GM12878 (cell line): ENCODE measurements at regions of chr22 and their contacts with region 1.

Region 1: GRCh38 chr22:32649515-32650200 is 151.8 kb upstream of the TIMP3 start:
- DNase-seq: no peak
- ATAC-seq: no peak
- H3K4me3 ChIP-seq: no peak overlapping the region
- H3K27ac ChIP-seq: no peak overlapping the region
- H3K4me1 ChIP-seq: peaks cover under 1% of the 10 kb centered on the region; the same call in 1 of the 2 replicates
- H3K27me3 ChIP-seq: no peaks in the 10 kb centered on the region
- CTCF ChIP-seq: no peak
- EP300 ChIP-seq: no peak
- POLR2A ChIP-seq: no peak
- RAD21 ChIP-seq: no peak

Region 2: DNA sequence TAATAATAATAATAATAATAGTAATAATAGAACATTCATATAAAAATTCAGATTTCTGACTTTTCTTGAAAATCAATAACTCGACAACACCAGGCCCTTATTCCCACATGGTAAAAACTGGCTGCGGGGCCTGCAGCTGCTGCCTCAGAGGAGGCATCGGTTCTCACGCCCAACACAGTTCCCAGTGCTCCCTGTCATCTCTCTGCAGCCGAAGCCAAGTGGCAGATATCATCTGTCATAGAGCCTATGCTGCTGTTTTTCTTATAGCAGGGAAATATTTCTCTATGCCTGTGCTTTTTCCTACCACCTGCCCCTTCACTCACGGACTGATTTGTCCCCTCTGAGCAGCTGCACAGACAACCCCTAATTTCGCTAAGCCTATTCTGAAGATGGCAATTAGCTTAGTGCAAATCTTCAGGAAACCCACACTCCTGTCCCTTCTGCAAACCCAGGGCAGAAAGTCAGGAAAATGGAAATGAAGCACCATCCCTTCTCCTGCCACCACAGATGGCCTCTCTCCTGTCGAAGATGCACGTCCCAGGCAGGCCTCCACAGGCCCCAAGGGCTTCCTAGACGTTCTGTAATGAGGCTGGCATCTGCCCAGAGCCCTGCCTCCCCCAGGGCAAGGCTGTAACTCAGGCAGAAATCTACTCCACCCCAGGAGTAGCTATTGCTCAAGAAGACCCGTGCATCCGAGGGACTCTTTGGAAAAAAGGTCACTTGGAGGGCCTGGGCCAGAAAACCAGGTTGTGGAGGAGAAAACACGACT is 341.9 kb after region 1 on chr22:
- CTCF ChIA-PET with region 1: no interaction called
- POLR2A ChIA-PET with region 1: no interaction called
- RAD21 ChIA-PET with region 1: no interaction called
- SMC1A ChIA-PET with region 1: no interaction called
- in situ Hi-C with region 1: loop called (anchors 10 kb)
- intact Hi-C with region 1: no loop called
- DNase-seq: no peak
- ATAC-seq: no peak
- H3K4me3 ChIP-seq: no peak overlapping the region
- H3K27ac ChIP-seq: no peak overlapping the region
- H3K4me1 ChIP-seq: no peaks in the 10 kb centered on the region
- H3K27me3 ChIP-seq: no peaks in the 10 kb centered on the region; a peak in 2 of 4 replicates
- CTCF ChIP-seq: no peak
- EP300 ChIP-seq: no peak
- POLR2A ChIP-seq: no peak
- RAD21 ChIP-seq: no peak